Cardiac septum (tissue), 1 donor: ENCODE measurements at regions of chr20 and their contacts with region 1.

Region 1: DNA sequence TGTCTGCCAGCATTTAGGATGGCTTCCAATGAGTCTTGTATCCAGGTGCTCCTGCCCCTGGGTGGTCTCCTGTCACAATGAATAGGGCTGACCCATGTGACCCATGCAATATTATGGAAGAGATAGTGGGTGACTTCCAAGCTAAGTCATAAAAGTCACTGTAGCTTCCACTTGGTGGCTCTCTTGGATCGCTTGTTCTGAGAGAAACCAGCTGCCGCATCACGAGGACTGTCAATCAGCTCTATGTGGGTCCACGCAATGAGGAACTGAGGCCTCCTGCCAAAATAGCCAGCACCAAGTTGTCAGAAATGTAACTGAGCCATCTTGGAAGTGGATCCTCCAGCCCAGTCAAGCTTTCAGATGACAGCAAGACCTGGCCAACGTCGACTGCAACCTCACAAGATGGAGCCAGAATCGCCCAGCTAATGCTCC is 14.9 kb upstream of the MATN4 start:
- DNase-seq: no peak

Region 2: GRCh38 chr20:45362804-45363610 is 40.0 kb after region 1 on chr20 and contains the start of gene SYS1:
- intact Hi-C with region 1: loop called (anchors 2 kb)
- DNase-seq: peak; percentile 99
- total RNA-seq, gene SYS1: 17.4 TPM

Region 3: DNA sequence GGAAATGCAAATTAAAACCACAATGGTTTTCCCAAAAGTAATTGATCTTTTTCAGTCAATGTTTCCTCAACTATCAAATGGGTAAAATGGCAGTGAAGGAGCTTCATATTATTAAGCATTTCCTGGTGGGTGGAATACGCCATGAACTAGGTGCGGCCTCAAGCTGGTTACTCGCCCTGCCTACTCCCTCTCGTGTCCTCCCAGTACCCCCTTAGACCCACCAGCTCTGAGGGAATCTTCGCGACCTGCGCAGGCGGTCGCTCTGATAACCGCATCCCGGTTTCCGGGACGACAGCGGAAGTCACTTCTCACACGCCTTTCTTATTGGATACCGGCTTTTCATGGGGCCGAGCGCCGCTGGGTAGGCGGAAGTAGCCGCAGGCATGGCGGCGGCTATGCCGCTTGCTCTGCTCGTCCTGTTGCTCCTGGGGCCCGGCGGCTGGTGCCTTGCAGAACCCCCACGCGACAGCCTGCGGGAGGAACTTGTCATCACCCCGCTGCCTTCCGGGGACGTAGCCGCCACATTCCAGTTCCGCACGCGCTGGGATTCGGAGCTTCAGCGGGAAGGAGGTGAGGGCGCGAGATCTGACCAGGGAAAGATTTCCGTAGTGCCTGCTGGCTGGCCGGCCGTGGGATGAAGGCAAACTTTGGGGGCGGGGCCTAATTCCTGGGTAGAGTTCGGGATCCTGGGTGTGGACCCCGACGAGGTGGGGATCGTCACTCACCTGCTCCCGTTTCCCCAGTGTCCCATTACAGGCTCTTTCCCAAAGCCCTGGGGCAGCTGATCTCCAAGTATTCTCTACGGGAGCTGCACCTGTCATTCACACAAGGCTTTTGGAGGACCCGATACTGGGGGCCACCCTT is 93.0 kb after region 1 on chr20 and contains the start of gene PIGT:
- intact Hi-C with region 1: no loop called
- DNase-seq: peak; percentile 95
- total RNA-seq, gene PIGT: 139 TPM

Region 4: GRCh38 chr20:45771182-45771759 is 448.3 kb after region 1 on chr20:
- intact Hi-C with region 1: loop called (anchors 2 kb)
- DNase-seq: peak; percentile 80